ENCODE measurements at regions of chr3 and their contacts with region 1.

Region 1: DNA sequence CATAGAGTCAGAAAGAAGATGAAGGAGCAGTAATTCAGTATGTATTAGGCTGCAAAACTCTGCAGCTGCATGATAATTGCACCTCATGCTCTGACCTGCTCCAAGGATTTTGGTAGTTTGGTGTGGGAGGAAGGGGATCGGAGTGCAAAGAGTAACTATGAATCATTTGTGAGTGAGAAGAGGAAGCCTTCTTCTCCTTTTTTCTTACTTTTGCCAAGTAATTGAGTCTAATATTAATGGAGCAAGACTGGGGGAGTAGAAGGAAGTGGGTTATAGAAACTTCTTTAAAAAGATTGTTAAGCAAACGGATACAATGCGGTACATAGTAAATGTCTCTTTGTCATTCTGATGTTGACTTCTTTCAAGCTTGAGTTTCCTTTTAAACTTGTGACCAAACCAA is 276.5 kb downstream of the EDEM1 start:
- H3K4me3 Mint-ChIP-seq: peak overlapping the region; percentile 30
- H3K27ac Mint-ChIP-seq: peak overlapping the region; percentile 55
- H3K4me1 Mint-ChIP-seq: peaks cover 50% of the 10 kb centered on the region
- H3K27me3 Mint-ChIP-seq: peaks cover 9% of the 10 kb centered on the region

Region 2: GRCh38 chr3:5376761-5377160 is 87.2 kb before region 1 on chr3:
- intact Hi-C with region 1: no loop called
- H3K4me3 Mint-ChIP-seq: no peak overlapping the region
- H3K27ac Mint-ChIP-seq: no peak overlapping the region
- H3K4me1 Mint-ChIP-seq: no peaks in the 10 kb centered on the region
- H3K27me3 Mint-ChIP-seq: no peaks in the 10 kb centered on the region

Region 3: DNA sequence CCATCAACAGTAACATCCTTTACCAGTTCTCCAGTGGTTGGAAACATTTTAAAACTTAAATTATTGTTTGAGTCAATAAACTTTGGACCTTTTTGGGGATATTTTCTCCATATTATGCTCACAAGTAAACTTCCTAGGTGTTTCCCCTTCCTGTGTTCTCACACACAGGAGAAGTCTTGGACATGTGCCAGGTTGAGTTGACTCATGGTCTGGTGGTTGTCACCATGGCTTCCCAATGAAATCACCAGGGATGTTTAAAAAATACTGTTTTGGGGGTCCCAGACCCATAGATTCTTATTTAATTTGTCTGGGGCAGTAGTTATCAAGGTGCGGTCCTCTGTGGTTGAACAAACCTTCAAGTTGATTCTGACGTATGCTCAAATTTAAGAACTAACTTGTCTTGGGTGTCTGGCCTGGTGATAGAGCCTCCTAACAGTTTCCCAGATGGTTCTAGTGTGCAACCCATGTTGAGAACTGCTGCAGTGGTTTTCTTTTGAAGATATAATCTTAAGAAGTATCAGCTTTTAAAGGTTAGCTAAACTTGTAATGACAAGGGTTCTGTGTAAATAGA is 15.3 kb after region 1 on chr3:
- intact Hi-C with region 1: no loop called
- H3K4me3 Mint-ChIP-seq: no peak overlapping the region
- H3K27ac Mint-ChIP-seq: no peak overlapping the region
- H3K4me1 Mint-ChIP-seq: no peaks in the 10 kb centered on the region
- H3K27me3 Mint-ChIP-seq: peaks cover 2% of the 10 kb centered on the region

Region 4: GRCh38 chr3:5607581-5607980 is 143.6 kb after region 1 on chr3:
- intact Hi-C with region 1: loop called (anchors 10 kb)
- H3K4me3 Mint-ChIP-seq: no peak overlapping the region
- H3K27ac Mint-ChIP-seq: no peak overlapping the region
- H3K4me1 Mint-ChIP-seq: peaks cover 20% of the 10 kb centered on the region
- H3K27me3 Mint-ChIP-seq: peaks cover 3% of the 10 kb centered on the region

Measured in dendritic cell treated with granulocyte-macrophage colony-stimulating factor and Interleukin-4, amounts not matched to agents 40 ng/mL and 50 ng/mL, for 4 days (primary cell).